ENCODE measurements at regions of chr4 and their contacts with region 1.

Region 1: GRCh38 chr4:48033825-48034413 is 17.3 kb downstream of the NIPAL1 start:
- DNase-seq: peak; percentile 47
- H3K4me3 Mint-ChIP-seq: peak overlapping the region; percentile 24
- H3K27ac Mint-ChIP-seq: no peak overlapping the region
- H3K4me1 Mint-ChIP-seq: peaks cover 20% of the 10 kb centered on the region
- H3K27me3 Mint-ChIP-seq: no peaks in the 10 kb centered on the region
- CTCF ChIP-seq: peak; percentile 35

Region 2: GRCh38 chr4:48071121-48071612 is 37.2 kb after region 1 on chr4:
- CTCF ChIA-PET with region 1: interaction called, 3 read pairs
- intact Hi-C with region 1: loop called (anchors 5 kb)
- DNase-seq: peak; percentile 49
- H3K4me3 Mint-ChIP-seq: no peak overlapping the region
- H3K27ac Mint-ChIP-seq: peak overlapping the region; percentile 69
- H3K4me1 Mint-ChIP-seq: peaks cover 34% of the 10 kb centered on the region
- H3K27me3 Mint-ChIP-seq: no peaks in the 10 kb centered on the region
- CTCF ChIP-seq: no peak

Region 3: DNA sequence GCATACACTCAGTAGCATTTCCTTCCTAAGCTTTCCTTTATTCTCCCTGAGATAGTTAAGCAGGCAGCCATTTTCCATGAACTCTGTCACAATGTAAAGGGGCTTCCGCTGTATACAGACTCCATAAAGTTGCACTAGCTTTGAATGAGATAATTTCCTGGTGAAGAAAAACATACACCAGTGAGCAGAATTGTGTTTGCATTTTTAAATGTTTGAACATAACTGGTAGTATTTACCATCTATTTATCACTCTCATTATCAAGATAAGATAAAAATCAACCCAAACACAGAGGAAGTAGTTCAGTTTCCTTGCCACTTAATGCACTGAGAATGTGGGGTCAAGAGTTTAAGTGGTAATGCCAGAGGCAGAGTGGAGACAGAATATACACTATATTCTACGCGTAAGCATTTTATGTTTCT is 46.1 kb after region 1 on chr4:
- CTCF ChIA-PET with region 1: no interaction called
- intact Hi-C with region 1: loop called (anchors 2 kb)
- DNase-seq: peak; percentile 45
- H3K4me3 Mint-ChIP-seq: peak overlapping the region; percentile 66
- H3K27ac Mint-ChIP-seq: peak overlapping the region; percentile 97
- H3K4me1 Mint-ChIP-seq: peaks cover 70% of the 10 kb centered on the region
- H3K27me3 Mint-ChIP-seq: no peaks in the 10 kb centered on the region
- CTCF ChIP-seq: no peak

Measured in Calu3 (cell line).